ENCODE measurements at regions of chr16 and their contacts with region 1.

Region 1: GRCh38 chr16:3123986-3124886 is 10.6 kb upstream of the ZNF213 start:
- DNase-seq: peak; percentile 72
- ATAC-seq: peak; percentile 97
- H3K4me3 ChIP-seq: peak overlapping the region; percentile 69; the same call in 1 of the 2 replicates
- H3K27ac ChIP-seq: peak overlapping the region; percentile 74
- H3K4me1 ChIP-seq: peaks cover 10% of the 10 kb centered on the region
- H3K27me3 ChIP-seq: no peaks in the 10 kb centered on the region
- CTCF ChIP-seq: peak; percentile 16 to 43 (median 30); a peak in 4 of 6 replicates
- EP300 ChIP-seq: no peak
- POLR2A ChIP-seq: peak; percentile 87
- RAD21 ChIP-seq: no peak

Region 2: DNA sequence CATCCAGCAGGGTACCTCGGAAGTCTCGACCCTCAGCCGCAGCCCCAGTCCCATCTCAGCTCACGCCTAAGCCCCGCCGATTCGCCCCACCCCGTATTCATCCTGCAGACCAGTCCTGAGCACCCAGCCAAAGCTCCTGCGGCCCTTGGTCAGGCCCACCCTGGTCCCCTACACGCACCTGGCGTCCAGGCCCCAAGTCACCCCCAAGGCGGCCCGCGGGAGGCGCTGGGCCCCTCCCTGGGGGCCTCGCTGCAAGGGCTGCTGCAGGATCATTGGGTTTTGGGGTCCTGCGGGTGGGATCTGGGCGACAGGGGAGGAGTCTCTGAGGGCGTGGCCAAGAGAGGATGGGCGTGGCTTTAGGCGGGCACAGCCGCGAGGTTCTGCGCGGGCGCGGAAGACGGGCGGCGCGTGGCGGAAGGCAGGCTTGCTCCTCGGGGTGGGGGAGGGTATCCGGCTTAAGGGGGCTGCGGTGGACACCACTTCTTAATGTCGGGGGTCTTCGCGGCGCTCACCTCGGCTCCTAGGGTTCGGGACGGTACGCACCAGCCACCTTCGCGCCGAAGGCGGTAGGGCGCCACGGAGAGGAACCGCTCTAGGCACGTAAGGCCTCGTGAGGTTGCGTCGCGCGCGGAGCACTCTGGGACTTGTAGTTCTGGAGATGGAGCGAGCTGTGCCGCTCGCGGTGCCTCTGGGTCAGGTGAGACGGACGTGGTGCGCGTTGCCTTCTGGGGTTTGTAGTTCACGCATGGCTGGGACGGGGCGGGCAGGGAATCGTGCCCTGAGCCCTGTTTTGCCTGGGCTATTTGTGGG is 100.4 kb before region 1 on chr16 and contains the starts of genes HCFC1R1 and THOC6:
- CTCF ChIA-PET with region 1: interaction called, 143 read pairs
- POLR2A ChIA-PET with region 1: no interaction called
- RAD21 ChIA-PET with region 1: interaction called, 6 read pairs
- SMC1A ChIA-PET with region 1: interaction called, 8 read pairs
- in situ Hi-C with region 1: no loop called
- intact Hi-C with region 1: no loop called
- DNase-seq: peak; percentile 94
- ATAC-seq: peak; percentile 85
- H3K4me3 ChIP-seq: peak within 1 kb of the TSS; percentile 87
- H3K27ac ChIP-seq: peak within 1 kb of the TSS; percentile 86
- H3K4me1 ChIP-seq: peaks cover 25% of the 10 kb centered on the region
- H3K27me3 ChIP-seq: no peaks in the 10 kb centered on the region; a peak in 1 of 4 replicates
- CTCF ChIP-seq: no peak
- EP300 ChIP-seq: no peak
- POLR2A ChIP-seq: peak; percentile 95
- RAD21 ChIP-seq: no peak
- polyA plus RNA-seq, gene HCFC1R1: 2.8 to 10.2 TPM
- polyA plus RNA-seq, gene THOC6: 1.0 to 2.4 TPM

Region 3: GRCh38 chr16:3099732-3100499 is 24.3 kb before region 1 on chr16:
- CTCF ChIA-PET with region 1: interaction called, 396 read pairs
- POLR2A ChIA-PET with region 1: interaction called, 10 read pairs
- RAD21 ChIA-PET with region 1: interaction called, 55 read pairs
- SMC1A ChIA-PET with region 1: interaction called, 67 read pairs
- in situ Hi-C with region 1: no loop called
- intact Hi-C with region 1: loop called (anchors 2 kb)
- DNase-seq: no peak
- ATAC-seq: peak; percentile 92
- H3K4me3 ChIP-seq: peak overlapping the region; percentile 35; the same call in 1 of the 2 replicates
- H3K27ac ChIP-seq: no peak overlapping the region
- H3K4me1 ChIP-seq: peaks cover 29% of the 10 kb centered on the region
- H3K27me3 ChIP-seq: no peaks in the 10 kb centered on the region
- CTCF ChIP-seq: no peak
- EP300 ChIP-seq: no peak
- POLR2A ChIP-seq: peak; percentile 39; the same call in 1 of the 2 replicates
- RAD21 ChIP-seq: no peak

Region 4: GRCh38 chr16:3106205-3106928 is 17.9 kb before region 1 on chr16:
- CTCF ChIA-PET with region 1: interaction called, 396 read pairs
- POLR2A ChIA-PET with region 1: interaction called, 10 read pairs
- RAD21 ChIA-PET with region 1: interaction called, 38 read pairs
- SMC1A ChIA-PET with region 1: interaction called, 67 read pairs
- in situ Hi-C with region 1: no loop called
- intact Hi-C with region 1: no loop called
- DNase-seq: no peak
- ATAC-seq: peak; percentile 95
- H3K4me3 ChIP-seq: peak overlapping the region; percentile 78
- H3K27ac ChIP-seq: peak overlapping the region; percentile 74
- H3K4me1 ChIP-seq: peaks cover 10% of the 10 kb centered on the region
- H3K27me3 ChIP-seq: no peaks in the 10 kb centered on the region
- CTCF ChIP-seq: no peak
- EP300 ChIP-seq: no peak
- POLR2A ChIP-seq: peak; percentile 90
- RAD21 ChIP-seq: no peak

Region 5: DNA sequence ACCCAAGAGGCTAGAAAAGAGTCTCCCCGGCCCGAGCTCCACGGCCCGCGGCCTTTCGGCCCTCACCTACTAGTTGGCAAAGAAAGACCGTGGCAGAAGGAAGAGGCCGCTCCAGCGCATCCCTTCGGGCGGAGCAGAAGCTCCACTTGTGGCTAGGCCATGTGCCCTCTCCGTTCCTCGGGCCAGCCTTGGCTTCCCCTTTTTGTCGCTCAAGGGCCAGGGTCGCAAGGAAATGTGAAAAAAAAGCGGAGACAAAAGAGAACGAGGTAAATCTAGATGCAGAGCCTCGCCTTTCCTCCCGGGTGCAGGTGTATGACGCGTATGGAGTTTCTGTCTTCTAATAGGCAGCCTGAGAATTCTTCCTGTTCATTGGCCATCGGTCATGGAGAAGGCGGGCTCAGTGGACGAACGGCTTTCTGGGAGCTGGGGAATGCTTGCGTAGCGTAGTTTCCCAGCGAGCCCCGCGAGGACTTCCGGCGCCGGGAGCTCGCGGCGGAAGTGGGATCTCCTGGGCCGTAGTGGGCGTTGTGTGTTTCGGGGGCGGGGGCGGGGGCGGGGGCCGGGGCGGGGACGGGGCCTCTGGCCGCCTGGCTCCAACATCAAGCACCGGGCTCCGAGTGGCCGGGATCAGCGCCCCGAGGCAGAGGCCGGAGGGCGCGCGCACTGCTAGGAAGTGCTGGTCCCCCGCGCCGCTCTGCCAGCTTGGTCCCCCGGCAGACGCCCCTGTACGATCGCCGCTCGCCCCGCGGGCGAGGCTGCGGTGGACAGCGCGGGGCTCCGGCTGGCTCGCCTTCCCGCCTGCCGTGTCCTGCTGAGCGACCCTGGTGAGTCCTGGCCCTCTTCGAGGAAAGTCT is 10.6 kb after region 1 on chr16 and contains the start of gene ZNF213:
- CTCF ChIA-PET with region 1: interaction called, 41 read pairs
- POLR2A ChIA-PET with region 1: interaction called, 5 read pairs
- RAD21 ChIA-PET with region 1: interaction called, 4 read pairs
- SMC1A ChIA-PET with region 1: interaction called, 5 read pairs
- in situ Hi-C with region 1: no loop called
- intact Hi-C with region 1: no loop called
- DNase-seq: peak; percentile 95
- ATAC-seq: peak; percentile 97
- H3K4me3 ChIP-seq: peak within 1 kb of the TSS; percentile 99
- H3K27ac ChIP-seq: peak within 1 kb of the TSS; percentile 95
- H3K4me1 ChIP-seq: peaks cover 5% of the 10 kb centered on the region; the same call in 1 of the 2 replicates
- H3K27me3 ChIP-seq: no peaks in the 10 kb centered on the region
- CTCF ChIP-seq: no peak
- EP300 ChIP-seq: no peak
- POLR2A ChIP-seq: peak; percentile 83
- RAD21 ChIP-seq: no peak
- polyA plus RNA-seq, gene ZNF213: 0.55 to 0.58 TPM